HepG2 (cell line): ENCODE measurements at regions of chr10 and their contacts with region 1.

Region 1: DNA sequence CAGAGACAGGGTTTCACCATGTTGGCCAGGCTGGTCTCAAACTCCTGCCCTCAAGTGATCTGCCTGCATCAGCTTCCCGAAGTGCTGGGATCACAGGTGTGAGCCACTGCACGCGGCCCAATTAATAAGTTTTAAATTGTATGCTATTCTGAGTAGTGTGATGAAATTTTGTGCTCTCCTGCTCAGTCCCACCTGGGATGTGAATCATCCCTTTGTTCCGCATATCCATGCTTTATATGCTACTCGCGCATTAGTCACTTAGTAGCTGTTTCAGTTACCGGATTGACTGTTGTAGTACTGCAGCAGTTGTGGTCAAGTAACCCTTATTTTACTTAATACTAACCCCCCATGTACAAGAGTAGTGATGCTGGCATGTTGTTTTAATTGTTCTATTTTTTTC is 47.3 kb upstream of the OIT3 start:
- DNase-seq: no peak
- ATAC-seq: no peak
- H3K4me3 ChIP-seq: no peak overlapping the region
- H3K27ac ChIP-seq: no peak overlapping the region
- H3K4me1 ChIP-seq: no peaks in the 10 kb centered on the region
- H3K27me3 ChIP-seq: no peaks in the 10 kb centered on the region
- CTCF ChIP-seq: no peak
- EP300 ChIP-seq: no peak
- POLR2A ChIP-seq: no peak
- RAD21 ChIP-seq: no peak

Region 2: DNA sequence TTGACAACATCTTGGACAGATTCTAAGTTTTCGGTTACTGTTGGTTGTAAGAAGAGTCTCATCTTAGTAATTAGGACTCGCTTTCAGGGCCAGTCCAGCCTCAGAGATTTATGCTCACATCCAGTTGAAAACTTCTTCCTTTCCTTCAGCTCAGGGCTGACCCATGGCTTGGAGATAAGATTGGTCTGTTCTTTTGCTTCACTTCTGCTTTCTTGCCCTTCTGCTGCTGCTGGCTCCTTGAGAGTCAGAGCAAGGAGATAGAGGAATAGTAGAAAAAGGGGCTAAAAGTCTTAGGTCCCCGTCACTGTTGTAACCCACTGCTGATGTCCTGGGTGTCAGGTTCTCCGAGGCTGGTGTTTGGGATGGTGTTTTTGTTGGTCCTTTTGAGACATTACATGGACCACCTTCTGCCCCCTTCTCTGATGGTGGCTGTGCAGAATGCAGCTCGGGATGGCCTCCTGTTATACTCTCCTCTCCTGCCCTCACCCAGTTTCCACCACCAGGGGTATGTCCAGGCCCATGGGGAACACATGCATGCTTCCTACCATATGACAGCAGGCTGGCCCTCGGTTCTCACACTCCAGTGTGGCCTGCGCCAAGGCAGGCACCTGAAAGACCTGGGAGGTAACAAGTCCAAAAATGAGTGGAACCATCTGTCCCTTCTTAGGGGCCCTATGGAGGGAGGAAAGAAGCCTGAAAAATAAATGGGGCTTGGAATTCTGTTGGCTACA is 1890.0 kb before region 1 on chr10:
- CTCF ChIA-PET with region 1: no interaction called
- POLR2A ChIA-PET with region 1: no interaction called
- in situ Hi-C with region 1: no loop called
- intact Hi-C with region 1: loop called (anchors 10 kb)
- DNase-seq: peak; percentile 20
- ATAC-seq: peak; percentile 98
- H3K4me3 ChIP-seq: no peak overlapping the region
- H3K27ac ChIP-seq: no peak overlapping the region
- H3K4me1 ChIP-seq: no peaks in the 10 kb centered on the region
- H3K27me3 ChIP-seq: peaks cover 1 to 11% of the 10 kb centered on the region in 2 experiments; a peak in 1 of 5 replicates
- CTCF ChIP-seq: peak; percentile 26; the same call in 1 of the 2 replicates
- EP300 ChIP-seq: no peak
- POLR2A ChIP-seq: no peak
- RAD21 ChIP-seq: no peak